Activated CD4-positive, alpha-beta T cell treated with anti-CD3 and anti-CD28 coated beads for 36 hours (primary cell): ENCODE measurements at regions of chr10 and their contacts with region 1.

Region 1: GRCh38 chr10:119750391-119751230 is 24.8 kb downstream of the INPP5F start:
- DNase-seq: peak; percentile 78
- ATAC-seq: peak; percentile 94
- H3K4me3 Mint-ChIP-seq: peak overlapping the region; percentile 5
- H3K27ac Mint-ChIP-seq: peak overlapping the region; percentile 71
- H3K4me1 Mint-ChIP-seq: peaks cover 7% of the 10 kb centered on the region
- H3K27me3 Mint-ChIP-seq: no peaks in the 10 kb centered on the region

Region 2: GRCh38 chr10:119546009-119546408 is 204.6 kb before region 1 on chr10:
- CTCF ChIA-PET with region 1: no interaction called
- POLR2A ChIA-PET with region 1: no interaction called
- intact Hi-C with region 1: no loop called
- DNase-seq: no peak
- ATAC-seq: no peak
- H3K4me3 Mint-ChIP-seq: no peak overlapping the region
- H3K27ac Mint-ChIP-seq: no peak overlapping the region
- H3K4me1 Mint-ChIP-seq: peaks cover 6% of the 10 kb centered on the region
- H3K27me3 Mint-ChIP-seq: peaks cover 2% of the 10 kb centered on the region

Region 3: DNA sequence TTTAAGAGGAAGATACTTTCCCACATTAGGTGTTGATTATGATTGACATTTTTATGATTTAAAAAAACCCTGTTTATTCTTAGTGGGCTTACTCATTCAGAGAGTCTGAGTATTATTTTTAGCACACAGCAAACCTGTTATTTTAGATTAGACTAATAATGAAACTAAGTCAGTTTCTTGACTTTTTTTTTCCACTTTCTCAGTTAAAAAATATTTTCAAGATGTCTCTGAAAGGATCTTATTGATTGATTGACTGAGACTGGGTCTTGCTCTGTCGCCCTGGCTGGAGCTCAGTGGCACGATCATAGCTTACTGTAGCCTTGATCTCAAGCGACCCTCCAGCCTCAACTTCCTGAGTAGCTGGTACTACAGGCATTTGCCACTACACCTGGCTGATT is 45.2 kb before region 1 on chr10:
- CTCF ChIA-PET with region 1: interaction called, 16 read pairs
- POLR2A ChIA-PET with region 1: no interaction called
- intact Hi-C with region 1: no loop called
- DNase-seq: peak; percentile 51
- ATAC-seq: peak; percentile 28
- H3K4me3 Mint-ChIP-seq: peak overlapping the region; percentile 41
- H3K27ac Mint-ChIP-seq: peak overlapping the region; percentile 96
- H3K4me1 Mint-ChIP-seq: peaks cover 82% of the 10 kb centered on the region
- H3K27me3 Mint-ChIP-seq: no peaks in the 10 kb centered on the region

Region 4: DNA sequence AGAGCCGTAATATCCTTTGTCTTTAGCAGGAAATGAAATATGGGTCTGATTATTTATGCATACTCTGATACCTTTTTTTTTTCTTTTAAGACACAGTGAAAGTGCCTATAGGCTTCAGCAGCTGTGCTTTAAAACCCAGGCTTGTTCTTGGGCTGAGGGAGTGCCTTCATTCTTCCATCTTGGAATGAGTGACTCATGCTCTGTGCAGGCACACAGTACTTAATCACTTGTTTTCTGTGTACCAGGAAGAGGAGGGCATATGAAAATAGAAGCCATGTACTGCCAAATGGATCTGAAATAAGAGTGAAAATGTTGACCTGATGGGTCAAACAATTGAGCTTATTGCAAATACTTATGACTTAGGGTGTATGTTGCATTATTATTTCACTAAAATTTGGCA is 12.8 kb before region 1 on chr10:
- CTCF ChIA-PET with region 1: interaction called, 14 read pairs
- POLR2A ChIA-PET with region 1: no interaction called
- intact Hi-C with region 1: no loop called
- DNase-seq: peak; percentile 25
- ATAC-seq: peak; percentile 82
- H3K4me3 Mint-ChIP-seq: no peak overlapping the region
- H3K27ac Mint-ChIP-seq: no peak overlapping the region
- H3K4me1 Mint-ChIP-seq: peaks cover 46% of the 10 kb centered on the region
- H3K27me3 Mint-ChIP-seq: no peaks in the 10 kb centered on the region

Region 5: DNA sequence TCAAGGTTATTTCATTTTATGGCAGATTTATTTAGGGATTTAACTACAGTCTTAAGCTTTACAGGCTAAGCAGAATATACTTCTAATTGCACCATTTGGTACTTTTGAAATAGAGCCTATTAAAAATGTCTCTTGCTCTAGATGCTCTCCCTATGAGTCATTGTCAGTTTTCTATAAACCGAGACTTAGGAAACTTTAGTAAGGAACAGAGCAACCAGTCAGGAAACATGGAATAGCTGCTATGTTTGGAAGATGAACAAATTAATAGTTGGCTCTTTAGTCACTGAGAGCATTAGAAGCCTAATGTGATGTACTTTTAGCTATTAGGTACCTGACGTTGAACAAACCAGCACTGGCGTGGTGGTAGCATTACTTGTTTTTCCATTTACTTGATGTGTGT is 10.5 kb after region 1 on chr10:
- CTCF ChIA-PET with region 1: interaction called, 19 read pairs
- POLR2A ChIA-PET with region 1: no interaction called
- intact Hi-C with region 1: no loop called
- DNase-seq: no peak
- ATAC-seq: no peak
- H3K4me3 Mint-ChIP-seq: no peak overlapping the region
- H3K27ac Mint-ChIP-seq: no peak overlapping the region
- H3K4me1 Mint-ChIP-seq: peaks cover 8% of the 10 kb centered on the region
- H3K27me3 Mint-ChIP-seq: no peaks in the 10 kb centered on the region

Region 6: DNA sequence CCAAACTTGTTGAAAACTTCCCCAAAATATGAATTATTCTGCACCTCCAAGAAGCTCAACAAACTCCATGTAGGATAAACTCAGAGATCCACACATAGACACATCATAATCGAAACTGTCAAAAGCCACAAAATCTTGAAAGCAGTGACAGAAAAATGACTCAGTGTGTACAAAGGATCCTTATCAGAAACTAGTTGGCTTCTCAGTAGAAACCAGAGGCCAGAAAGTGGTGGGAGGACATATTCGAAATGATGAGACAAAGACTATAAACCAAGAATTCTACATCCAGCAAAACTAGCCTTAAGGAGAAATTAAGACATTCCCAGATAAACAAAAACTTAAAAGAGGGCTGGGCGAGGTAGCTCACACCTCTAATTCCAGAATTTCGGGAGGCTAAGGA is 83.6 kb after region 1 on chr10:
- CTCF ChIA-PET with region 1: interaction called, 6 read pairs
- POLR2A ChIA-PET with region 1: no interaction called
- intact Hi-C with region 1: loop called (anchors 5 kb)
- DNase-seq: peak; percentile 35
- ATAC-seq: peak; percentile 80
- H3K4me3 Mint-ChIP-seq: no peak overlapping the region
- H3K27ac Mint-ChIP-seq: peak overlapping the region; percentile 83
- H3K4me1 Mint-ChIP-seq: peaks cover 38% of the 10 kb centered on the region
- H3K27me3 Mint-ChIP-seq: no peaks in the 10 kb centered on the region

Region 7: GRCh38 chr10:119919826-119920225 is 169.2 kb after region 1 on chr10:
- CTCF ChIA-PET with region 1: interaction called, 6 read pairs
- POLR2A ChIA-PET with region 1: no interaction called
- intact Hi-C with region 1: loop called in 1 of 2 experiments (anchors 5 kb)
- DNase-seq: no peak
- ATAC-seq: no peak
- H3K4me3 Mint-ChIP-seq: no peak overlapping the region
- H3K27ac Mint-ChIP-seq: no peak overlapping the region
- H3K4me1 Mint-ChIP-seq: peaks cover 9% of the 10 kb centered on the region
- H3K27me3 Mint-ChIP-seq: no peaks in the 10 kb centered on the region

Region 8: DNA sequence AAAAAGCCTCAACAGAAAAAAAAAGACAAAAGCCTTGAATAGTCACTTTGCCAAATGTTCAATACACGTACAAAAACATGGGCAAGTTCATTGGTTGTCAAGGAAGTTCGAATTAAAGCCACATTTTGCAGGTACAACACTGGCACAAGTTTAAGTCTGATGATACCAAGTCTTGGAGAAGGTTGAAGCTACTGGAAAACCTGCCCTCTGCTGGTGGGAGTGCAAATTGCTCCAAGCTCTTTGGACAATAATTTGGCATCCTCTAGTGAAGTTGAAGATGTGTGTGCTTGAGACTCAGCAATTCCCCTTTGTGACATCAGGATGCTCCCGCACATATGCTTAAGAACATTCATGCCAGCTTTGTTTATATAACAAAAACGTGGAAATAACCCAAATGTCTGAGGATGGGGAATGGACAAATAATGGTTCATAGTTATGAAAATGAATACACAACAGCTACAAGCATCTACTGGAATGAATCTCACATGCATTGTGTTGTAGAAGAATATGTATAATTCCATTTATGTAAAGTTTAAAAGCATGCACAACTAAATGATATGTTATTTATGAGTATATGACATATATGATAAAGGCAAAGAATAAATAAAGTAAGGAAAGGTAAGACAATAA is 586.4 kb after region 1 on chr10:
- CTCF ChIA-PET with region 1: no interaction called
- POLR2A ChIA-PET with region 1: no interaction called
- intact Hi-C with region 1: loop called in 1 of 2 experiments (anchors 1 kb)
- DNase-seq: peak; percentile 75
- ATAC-seq: no peak
- H3K4me3 Mint-ChIP-seq: no peak overlapping the region
- H3K27ac Mint-ChIP-seq: no peak overlapping the region
- H3K4me1 Mint-ChIP-seq: no peaks in the 10 kb centered on the region
- H3K27me3 Mint-ChIP-seq: peaks cover 11% of the 10 kb centered on the region